ENCODE measurements at regions of chr10 and their contacts with region 1.

Region 1: DNA sequence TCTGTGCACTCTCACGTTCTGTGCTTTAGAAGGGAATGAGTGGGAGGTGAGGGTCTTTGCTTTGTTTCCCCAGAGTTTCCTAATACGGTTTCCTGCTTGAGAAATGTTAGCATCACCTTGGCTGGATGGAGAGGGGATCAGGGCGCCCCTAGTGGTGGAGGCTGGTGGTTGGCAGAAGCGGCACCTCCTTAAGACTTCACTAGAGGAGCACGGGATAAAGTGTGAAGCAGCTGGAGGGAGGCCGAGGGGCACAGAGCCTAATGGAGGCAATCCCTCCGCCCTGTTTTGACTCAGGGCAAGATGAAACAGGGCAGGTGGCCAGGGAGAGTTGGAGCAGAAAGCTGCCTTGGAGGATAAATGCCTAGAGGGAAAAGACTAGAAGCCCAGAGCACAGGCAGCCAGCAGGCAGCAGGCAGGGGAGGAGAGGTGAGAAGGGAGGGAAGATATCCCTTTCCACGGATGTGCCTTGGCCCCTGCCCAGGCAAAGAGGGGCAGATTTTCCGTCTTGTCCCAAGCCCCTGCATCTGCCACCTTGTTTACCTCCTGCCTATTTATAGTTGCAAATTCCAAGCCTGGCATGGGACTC is 56.0 kb upstream of the BTRC start:
- DNase-seq: peak; percentile 37
- H3K4me3 ChIP-seq: no peak overlapping the region
- H3K27ac ChIP-seq: no peak overlapping the region
- H3K4me1 ChIP-seq: no peaks in the 10 kb centered on the region
- H3K27me3 ChIP-seq: no peaks in the 10 kb centered on the region
- CTCF ChIP-seq: peak; percentile 88 to 91

Region 2: GRCh38 chr10:101172741-101173140 is 125.3 kb before region 1 on chr10:
- CTCF ChIA-PET with region 1: no interaction called
- dilution Hi-C with region 1: no loop called
- in situ Hi-C with region 1: no loop called
- intact Hi-C with region 1: no loop called
- DNase-seq: no peak
- H3K4me3 ChIP-seq: no peak overlapping the region
- H3K27ac ChIP-seq: no peak overlapping the region
- H3K4me1 ChIP-seq: no peaks in the 10 kb centered on the region
- H3K27me3 ChIP-seq: no peaks in the 10 kb centered on the region
- CTCF ChIP-seq: no peak

Region 3: GRCh38 chr10:101182936-101183335 is 115.1 kb before region 1 on chr10:
- CTCF ChIA-PET with region 1: no interaction called
- dilution Hi-C with region 1: loop called (anchors 5 kb)
- in situ Hi-C with region 1: no loop called
- intact Hi-C with region 1: no loop called
- DNase-seq: no peak
- H3K4me3 ChIP-seq: no peak overlapping the region
- H3K27ac ChIP-seq: no peak overlapping the region
- H3K4me1 ChIP-seq: no peaks in the 10 kb centered on the region
- H3K27me3 ChIP-seq: no peaks in the 10 kb centered on the region
- CTCF ChIP-seq: no peak

Region 4: DNA sequence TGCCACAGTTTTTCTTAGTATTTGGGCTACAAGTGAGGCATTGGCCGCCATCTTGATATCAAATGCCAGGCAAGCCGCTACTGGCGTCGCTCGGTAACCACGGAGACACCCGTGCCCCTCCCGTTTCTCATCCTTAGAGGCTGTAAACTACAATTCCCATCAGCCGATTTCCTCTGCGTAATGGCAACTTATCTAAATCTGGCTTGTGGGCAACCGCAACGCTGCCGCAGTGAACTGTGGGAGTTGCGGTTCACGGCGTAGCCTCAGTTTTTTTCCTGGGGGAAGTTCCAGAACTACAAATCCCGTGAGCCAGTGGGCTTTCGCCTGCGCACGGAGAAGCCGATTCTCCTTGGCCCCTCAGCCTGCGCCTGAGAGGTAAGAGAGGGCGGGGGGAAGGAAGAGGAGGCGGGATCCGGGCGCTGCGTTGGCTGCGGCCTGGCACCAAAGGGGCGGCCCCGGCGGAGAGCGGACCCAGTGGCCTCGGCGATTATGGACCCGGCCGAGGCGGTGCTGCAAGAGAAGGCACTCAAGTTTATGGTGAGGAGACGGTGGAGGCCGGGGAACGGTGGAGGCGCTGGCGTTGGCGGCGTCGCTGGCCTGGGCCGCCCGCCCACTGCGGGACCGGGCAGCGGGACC is 55.8 kb after region 1 on chr10 and contains the start of gene BTRC:
- CTCF ChIA-PET with region 1: no interaction called
- dilution Hi-C with region 1: no loop called
- in situ Hi-C with region 1: no loop called
- intact Hi-C with region 1: loop called (anchors 5 kb)
- DNase-seq: peak; percentile 100
- H3K4me3 ChIP-seq: peak within 1 kb of the TSS; percentile 75 to 93 (median 85)
- H3K27ac ChIP-seq: peak within 1 kb of the TSS; percentile 66
- H3K4me1 ChIP-seq: peaks cover 9% of the 10 kb centered on the region
- H3K27me3 ChIP-seq: peaks cover 3% of the 10 kb centered on the region
- CTCF ChIP-seq: no peak
- total RNA-seq, gene BTRC: 12.3 to 20.3 TPM

Region 5: DNA sequence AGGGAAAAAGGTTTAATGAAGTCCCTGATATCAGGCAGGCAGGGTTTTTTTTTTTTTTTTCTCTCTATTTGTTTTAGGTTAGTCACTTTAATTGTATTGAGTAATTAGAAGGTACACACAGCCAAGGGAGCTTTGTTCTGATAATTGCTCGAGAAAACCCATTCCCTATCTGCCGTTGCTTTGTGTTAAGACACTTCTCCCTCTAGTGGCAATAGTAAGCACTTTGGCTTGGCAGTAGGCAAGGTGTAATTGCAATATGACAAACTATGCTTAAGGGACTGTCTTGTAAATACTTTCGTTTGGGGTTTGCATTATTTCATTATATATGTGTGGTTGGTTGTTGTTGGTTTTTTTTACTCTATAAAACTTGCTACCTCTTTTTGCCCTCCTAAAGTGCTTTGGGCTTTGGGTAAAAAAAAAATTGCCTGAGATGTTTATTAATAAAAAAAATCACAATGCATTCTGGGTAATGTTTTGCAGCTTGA is 169.3 kb after region 1 on chr10:
- CTCF ChIA-PET with region 1: interaction called, 4 read pairs
- dilution Hi-C with region 1: no loop called
- in situ Hi-C with region 1: no loop called
- intact Hi-C with region 1: loop called (anchors 1 kb)
- DNase-seq: peak; percentile 73
- H3K4me3 ChIP-seq: peak overlapping the region in 1 of 3 experiments; percentile 11
- H3K27ac ChIP-seq: no peak overlapping the region
- H3K4me1 ChIP-seq: no peaks in the 10 kb centered on the region
- H3K27me3 ChIP-seq: no peaks in the 10 kb centered on the region
- CTCF ChIP-seq: peak; percentile 90 to 98

Region 6: DNA sequence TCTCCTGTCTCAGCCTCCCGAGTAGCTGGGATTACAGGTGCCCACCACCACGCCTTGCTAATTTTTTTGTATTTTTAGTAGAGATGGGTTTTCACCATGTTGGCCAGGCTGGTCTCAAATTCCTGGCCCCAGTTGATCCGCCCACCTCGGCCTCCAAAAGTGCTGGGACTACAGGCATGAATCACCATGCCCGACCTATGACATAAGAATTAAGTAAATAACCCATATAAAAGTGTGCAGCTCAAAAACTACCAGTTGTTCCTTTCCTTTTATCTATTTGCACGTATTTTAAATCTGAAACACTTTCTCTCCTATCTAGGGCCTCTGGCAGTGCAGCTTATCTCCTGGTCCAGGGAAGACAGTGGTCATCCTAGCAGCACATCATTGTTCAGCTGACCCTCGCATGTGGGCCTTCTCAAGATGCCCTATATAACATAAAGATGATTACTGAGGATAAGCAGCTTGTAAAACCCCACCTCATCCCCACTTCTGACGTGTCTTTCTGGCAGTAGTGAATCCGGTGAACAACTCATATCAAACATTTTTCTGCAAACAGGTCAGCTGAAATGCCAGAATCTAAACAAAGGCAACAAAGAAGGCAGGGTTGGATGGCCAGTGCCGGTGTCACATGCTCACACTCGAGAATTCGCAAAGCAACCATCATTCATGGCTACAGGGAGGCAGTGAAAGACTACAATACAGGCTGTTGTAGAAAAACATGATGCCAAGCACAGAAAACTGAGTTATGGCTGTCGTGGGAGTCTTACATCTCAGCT is 581.6 kb after region 1 on chr10:
- CTCF ChIA-PET with region 1: no interaction called
- dilution Hi-C with region 1: no loop called
- in situ Hi-C with region 1: no loop called
- intact Hi-C with region 1: no loop called
- DNase-seq: no peak
- H3K4me3 ChIP-seq: no peak overlapping the region
- H3K27ac ChIP-seq: no peak overlapping the region
- H3K4me1 ChIP-seq: no peaks in the 10 kb centered on the region
- H3K27me3 ChIP-seq: no peaks in the 10 kb centered on the region
- CTCF ChIP-seq: no peak